ENCODE measurements at regions of chr2 and their contacts with region 1.

Region 1: GRCh38 chr2:195656859-195657633 is at the start of gene SLC39A10:
- DNase-seq: peak; percentile 90 to 100 (median 98)
- ATAC-seq: peak; percentile 69 to 76
- H3K4me3 Mint-ChIP-seq: peak within 1 kb of the TSS; percentile 92 to 100 (median 98)
- H3K27ac Mint-ChIP-seq: peak within 1 kb of the TSS; percentile 99 to 100 (median 100)
- H3K4me1 Mint-ChIP-seq: peaks cover 19 to 47% (median 29%) of the 10 kb centered on the region in 4 donors
- H3K27me3 Mint-ChIP-seq: peaks cover 0 to 3% (median 0%) of the 10 kb centered on the region in 5 donors
- polyA plus RNA-seq, gene SLC39A10: 8.1 to 14.6 (median 12.6) TPM

Region 2: DNA sequence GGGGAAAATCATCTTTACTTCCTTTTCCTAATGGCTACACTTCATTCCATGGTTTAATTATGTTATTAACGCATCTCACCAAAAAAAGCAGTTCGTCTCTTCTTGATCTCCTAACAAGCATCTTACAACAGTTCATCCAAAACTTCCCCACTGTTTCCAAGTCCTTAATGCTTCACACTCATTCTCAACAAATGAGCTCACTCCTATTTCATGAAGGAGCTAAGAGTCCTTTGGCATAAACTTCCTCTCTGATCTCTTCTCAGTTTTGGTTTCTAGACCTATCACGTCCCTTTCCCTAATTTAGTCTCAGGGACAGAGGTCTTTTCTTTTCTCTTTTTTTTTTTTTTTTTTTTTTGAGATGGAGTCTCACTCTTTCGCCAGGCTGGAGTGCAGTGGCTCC is 205.9 kb before region 1 on chr2:
- POLR2A ChIA-PET with region 1: no interaction called
- DNase-seq: no peak
- ATAC-seq: no peak
- H3K4me3 Mint-ChIP-seq: no peak overlapping the region
- H3K27ac Mint-ChIP-seq: no peak overlapping the region
- H3K4me1 Mint-ChIP-seq: peaks cover 0 to 6% (median 3%) of the 10 kb centered on the region in 4 donors
- H3K27me3 Mint-ChIP-seq: no peaks in the 10 kb centered on the region

Region 3: GRCh38 chr2:195498176-195498575 is 158.9 kb before region 1 on chr2:
- POLR2A ChIA-PET with region 1: interaction called, 34 read pairs
- DNase-seq: peak; percentile 17 to 81 (median 48)
- ATAC-seq: peak in 1 of 2 donors; percentile 76
- H3K4me3 Mint-ChIP-seq: peak overlapping the region in 1 of 10 donors; percentile 1
- H3K27ac Mint-ChIP-seq: peak overlapping the region in 6 of 10 donors; percentile 17 to 63 (median 38)
- H3K4me1 Mint-ChIP-seq: peaks cover 18 to 50% (median 36%) of the 10 kb centered on the region in 4 donors
- H3K27me3 Mint-ChIP-seq: no peaks in the 10 kb centered on the region

Region 4: GRCh38 chr2:195533771-195534642 is 123.0 kb before region 1 on chr2:
- POLR2A ChIA-PET with region 1: interaction called, 152 read pairs
- DNase-seq: peak in 8 of 10 donors; percentile 15 to 71 (median 44)
- ATAC-seq: peak; percentile 43 to 66
- H3K4me3 Mint-ChIP-seq: peak overlapping the region; percentile 69 to 92 (median 88)
- H3K27ac Mint-ChIP-seq: peak overlapping the region; percentile 84 to 100 (median 98)
- H3K4me1 Mint-ChIP-seq: peaks cover 33 to 85% (median 82%) of the 10 kb centered on the region in 4 donors
- H3K27me3 Mint-ChIP-seq: no peaks in the 10 kb centered on the region

Region 5: GRCh38 chr2:195543902-195544894 is 112.8 kb before region 1 on chr2:
- POLR2A ChIA-PET with region 1: interaction called, 11 read pairs
- DNase-seq: no peak
- ATAC-seq: peak in 1 of 2 donors; percentile 20
- H3K4me3 Mint-ChIP-seq: peak overlapping the region in 4 of 10 donors; percentile 1 to 33 (median 17)
- H3K27ac Mint-ChIP-seq: peak overlapping the region in 7 of 10 donors; percentile 21 to 92 (median 56)
- H3K4me1 Mint-ChIP-seq: peaks cover 19 to 46% (median 44%) of the 10 kb centered on the region in 4 donors
- H3K27me3 Mint-ChIP-seq: no peaks in the 10 kb centered on the region

Region 6: GRCh38 chr2:195559431-195559914 is 97.6 kb before region 1 on chr2:
- POLR2A ChIA-PET with region 1: interaction called, 74 read pairs
- DNase-seq: peak; percentile 29 to 92 (median 77)
- ATAC-seq: peak; percentile 94 to 98
- H3K4me3 Mint-ChIP-seq: peak overlapping the region; percentile 54 to 88 (median 78)
- H3K27ac Mint-ChIP-seq: peak overlapping the region; percentile 87 to 100 (median 94)
- H3K4me1 Mint-ChIP-seq: peaks cover 33 to 78% (median 61%) of the 10 kb centered on the region in 4 donors
- H3K27me3 Mint-ChIP-seq: no peaks in the 10 kb centered on the region

Region 7: DNA sequence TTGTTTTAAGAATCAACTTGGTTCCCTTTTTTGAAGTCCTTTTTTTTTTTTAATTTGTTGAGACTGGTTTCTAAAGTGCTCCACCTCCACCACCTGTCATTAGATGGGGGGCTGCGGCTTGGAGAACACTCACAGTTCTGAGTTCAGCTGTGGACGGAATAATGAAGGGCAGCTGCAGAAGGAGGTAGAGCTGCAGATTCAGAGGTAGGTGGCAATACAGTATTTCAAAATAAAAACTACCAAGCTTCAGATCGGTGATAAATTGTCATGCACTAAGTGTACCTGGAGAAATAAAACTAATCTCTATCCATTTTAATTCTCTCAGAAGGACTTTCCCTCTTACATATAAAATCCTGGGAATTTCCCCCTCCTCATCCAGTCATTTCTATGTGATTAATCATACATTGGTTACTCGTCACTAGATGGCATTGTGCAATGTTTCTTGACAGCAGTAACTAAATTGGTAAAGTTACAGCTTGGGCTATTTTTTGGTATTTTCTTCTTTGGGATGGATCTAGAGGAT is 81.1 kb before region 1 on chr2:
- POLR2A ChIA-PET with region 1: interaction called, 128 read pairs
- DNase-seq: peak in 6 of 10 donors; percentile 3 to 36 (median 22)
- ATAC-seq: peak; percentile 72 to 73
- H3K4me3 Mint-ChIP-seq: peak overlapping the region; percentile 43 to 77 (median 64)
- H3K27ac Mint-ChIP-seq: peak overlapping the region; percentile 47 to 94 (median 84)
- H3K4me1 Mint-ChIP-seq: peaks cover 30 to 71% (median 67%) of the 10 kb centered on the region in 4 donors
- H3K27me3 Mint-ChIP-seq: no peaks in the 10 kb centered on the region

Region 8: GRCh38 chr2:195642027-195642676 is 14.9 kb before region 1 on chr2:
- POLR2A ChIA-PET with region 1: interaction called, 10 read pairs
- DNase-seq: no peak
- ATAC-seq: no peak
- H3K4me3 Mint-ChIP-seq: no peak overlapping the region
- H3K27ac Mint-ChIP-seq: peak overlapping the region in 1 of 10 donors; percentile 28
- H3K4me1 Mint-ChIP-seq: peaks cover 3 to 33% (median 4%) of the 10 kb centered on the region in 4 donors
- H3K27me3 Mint-ChIP-seq: no peaks in the 10 kb centered on the region

Region 9: DNA sequence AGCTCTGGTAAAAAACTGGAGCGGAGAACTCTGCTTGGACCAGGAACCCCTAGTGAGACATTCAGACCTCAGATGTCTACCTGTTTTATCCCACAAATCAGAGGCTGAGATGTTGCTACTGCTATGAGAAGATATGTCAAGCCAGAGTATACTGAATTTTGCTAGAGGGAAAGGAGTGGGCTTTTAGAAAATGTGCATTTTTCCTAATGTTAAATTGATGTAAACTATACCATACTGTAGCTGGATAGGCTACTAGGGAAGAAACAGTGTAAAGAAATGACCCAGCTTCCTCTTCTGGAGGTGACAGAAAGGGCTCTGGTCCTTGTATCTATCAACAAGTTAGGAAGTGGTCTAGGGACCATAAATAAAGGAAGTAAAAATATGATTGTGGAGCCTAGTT is 65.0 kb after region 1 on chr2:
- POLR2A ChIA-PET with region 1: no interaction called
- DNase-seq: no peak
- ATAC-seq: no peak
- H3K4me3 Mint-ChIP-seq: no peak overlapping the region
- H3K27ac Mint-ChIP-seq: peak overlapping the region in 1 of 10 donors; percentile 63
- H3K4me1 Mint-ChIP-seq: peaks cover 0 to 11% (median 7%) of the 10 kb centered on the region in 4 donors
- H3K27me3 Mint-ChIP-seq: no peaks in the 10 kb centered on the region

Measured in naive thymus-derived CD8-positive, alpha-beta T cell (primary cell).